ENCODE measurements at regions of chr4 and their contacts with region 1.

Region 1: GRCh38 chr4:121484633-121485032 is 103.8 kb upstream of the QRFPR start:
- DNase-seq: peak; percentile 28
- H3K4me3 ChIP-seq: no peak overlapping the region
- H3K27ac ChIP-seq: no peak overlapping the region
- H3K4me1 ChIP-seq: no peaks in the 10 kb centered on the region
- CTCF ChIP-seq: peak; percentile 78

Region 2: GRCh38 chr4:121656269-121656641 is 171.6 kb after region 1 on chr4:
- CTCF ChIA-PET with region 1: no interaction called
- POLR2A ChIA-PET with region 1: no interaction called
- intact Hi-C with region 1: loop called (anchors 10 kb)
- DNase-seq: peak; percentile 47
- H3K4me3 ChIP-seq: no peak overlapping the region
- H3K27ac ChIP-seq: no peak overlapping the region
- H3K4me1 ChIP-seq: peaks cover 6% of the 10 kb centered on the region
- CTCF ChIP-seq: peak; percentile 58